Activated CD8-positive, alpha-beta T cell treated with anti-CD3 and anti-CD28 coated beads for 36 hours (primary cell): ENCODE measurements at regions of chr2 and their contacts with region 1.

Region 1: DNA sequence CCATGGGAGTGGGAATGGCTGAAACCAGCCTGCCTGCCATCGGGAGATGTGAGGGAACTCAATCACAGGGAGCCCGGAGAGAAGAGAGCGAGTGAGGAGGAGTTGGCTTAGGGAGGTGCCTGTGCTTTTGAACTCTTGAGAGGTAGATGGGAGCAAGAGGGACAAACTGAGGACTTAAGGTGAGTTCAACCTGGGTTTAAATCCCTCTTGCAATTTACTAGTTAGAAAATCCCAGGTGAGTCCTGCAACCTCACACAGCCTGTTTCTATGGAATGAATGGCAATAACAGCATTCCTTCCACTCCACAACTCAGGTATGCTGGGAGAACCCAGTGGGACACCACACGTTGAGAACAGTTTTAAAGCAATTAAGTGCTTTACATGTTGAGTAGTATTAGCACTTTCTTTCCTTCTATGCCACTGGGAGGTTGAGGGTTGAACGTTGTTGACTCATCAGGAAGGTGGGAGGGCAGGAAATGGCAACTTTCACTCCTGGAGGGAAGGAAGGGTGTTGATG is 57.3 kb downstream of the VIT start:
- DNase-seq: no peak
- ATAC-seq: no peak
- H3K4me3 Mint-ChIP-seq: no peak overlapping the region
- H3K27ac Mint-ChIP-seq: no peak overlapping the region
- H3K4me1 Mint-ChIP-seq: no peaks in the 10 kb centered on the region
- H3K27me3 Mint-ChIP-seq: peaks cover 19% of the 10 kb centered on the region
- CTCF ChIP-seq: no peak

Region 2: GRCh38 chr2:36717603-36718266 is 36.0 kb before region 1 on chr2:
- CTCF ChIA-PET with region 1: no interaction called
- POLR2A ChIA-PET with region 1: no interaction called
- intact Hi-C with region 1: no loop called
- DNase-seq: no peak
- ATAC-seq: no peak
- H3K4me3 Mint-ChIP-seq: no peak overlapping the region
- H3K27ac Mint-ChIP-seq: no peak overlapping the region
- H3K4me1 Mint-ChIP-seq: no peaks in the 10 kb centered on the region
- H3K27me3 Mint-ChIP-seq: no peaks in the 10 kb centered on the region
- CTCF ChIP-seq: no peak

Region 3: GRCh38 chr2:36770542-36771287 is 17.0 kb after region 1 on chr2:
- CTCF ChIA-PET with region 1: interaction called, 15 read pairs
- POLR2A ChIA-PET with region 1: no interaction called
- intact Hi-C with region 1: no loop called
- DNase-seq: peak; percentile 64
- ATAC-seq: peak; percentile 74
- H3K4me3 Mint-ChIP-seq: no peak overlapping the region
- H3K27ac Mint-ChIP-seq: no peak overlapping the region
- H3K4me1 Mint-ChIP-seq: peaks cover 1% of the 10 kb centered on the region
- H3K27me3 Mint-ChIP-seq: no peaks in the 10 kb centered on the region
- CTCF ChIP-seq: peak; percentile 73